Gastrocnemius medialis (tissue), 4 donors: ENCODE measurements at regions of chr10 and their contacts with region 1.

Region 1: GRCh38 chr10:14954001-14954770 is at the start of gene DCLRE1C:
- DNase-seq: peak; percentile 83 to 87
- ATAC-seq: peak; percentile 96 to 97
- H3K4me3 ChIP-seq: peak within 1 kb of the TSS; percentile 79 to 92 (median 85)
- H3K27ac ChIP-seq: peak within 1 kb of the TSS; percentile 83 to 90 (median 84)
- H3K4me1 ChIP-seq: peaks cover 4 to 12% of the 10 kb centered on the region in 2 donors
- H3K27me3 ChIP-seq: no peaks in the 10 kb centered on the region
- CTCF ChIP-seq: no peak
- POLR2A ChIP-seq: peak in 1 of 2 donors; percentile 41
- total RNA-seq, gene DCLRE1C: 3.0 to 3.6 (median 3.3) TPM

Region 2: DNA sequence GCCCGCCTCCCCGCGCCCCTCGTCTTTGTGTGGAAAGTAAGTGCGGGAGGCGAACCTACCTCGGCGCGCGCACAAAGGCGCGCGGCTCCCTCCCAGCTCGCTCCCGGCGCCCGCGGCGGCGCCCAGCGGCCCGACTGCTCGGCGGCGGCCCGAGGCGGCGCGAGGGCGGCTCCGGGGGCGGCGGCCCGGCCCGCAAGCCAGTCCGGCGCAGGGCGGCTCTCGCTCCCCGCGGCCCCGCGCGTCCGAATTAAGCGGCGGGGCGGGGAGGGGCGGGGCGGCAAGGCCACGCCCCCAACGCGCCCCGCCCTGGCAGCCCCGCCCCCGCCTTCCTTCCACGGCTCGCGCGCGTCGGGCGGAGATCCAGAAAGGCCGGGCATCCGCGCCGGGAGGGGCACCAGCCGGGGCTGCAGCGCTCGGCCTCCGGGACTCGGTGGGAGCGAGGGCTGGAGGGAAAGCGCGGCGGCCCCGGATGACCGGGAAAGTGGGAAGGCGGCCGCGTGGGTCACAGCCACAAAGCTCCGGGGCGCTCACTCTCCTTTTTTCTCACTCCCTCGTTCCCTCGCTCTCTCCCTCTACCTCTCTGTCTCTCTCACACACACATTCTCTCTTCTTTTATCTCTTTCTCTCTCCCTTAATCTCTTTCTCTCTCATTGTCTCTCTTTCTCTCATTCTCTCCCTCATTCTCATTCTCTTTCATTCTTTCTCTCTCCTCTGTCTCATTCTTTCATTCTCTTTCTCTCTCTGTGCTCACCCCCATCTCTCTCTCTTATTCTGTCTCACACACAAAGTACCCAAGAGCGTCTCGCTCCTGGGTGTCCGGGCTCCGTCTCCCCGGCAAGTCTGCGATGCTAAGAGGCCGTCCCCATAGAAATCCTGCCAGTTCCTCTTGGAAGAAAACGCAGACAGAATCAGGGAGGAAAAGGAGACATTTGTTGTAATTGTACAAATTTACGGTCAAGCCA is 349.7 kb before region 1 on chr10:
- in situ Hi-C with region 1: no loop called
- intact Hi-C with region 1: loop called (anchors 5 kb)
- DNase-seq: peak; percentile 52 to 53
- ATAC-seq: peak; percentile 89 to 90
- H3K4me3 ChIP-seq: peak overlapping the region; percentile 56 to 79 (median 66)
- H3K27ac ChIP-seq: peak overlapping the region; percentile 30 to 58 (median 44)
- H3K4me1 ChIP-seq: peaks cover 7 to 12% of the 10 kb centered on the region in 2 donors
- H3K27me3 ChIP-seq: no peaks in the 10 kb centered on the region
- CTCF ChIP-seq: no peak
- POLR2A ChIP-seq: peak in 1 of 2 donors; percentile 66

Region 3: DNA sequence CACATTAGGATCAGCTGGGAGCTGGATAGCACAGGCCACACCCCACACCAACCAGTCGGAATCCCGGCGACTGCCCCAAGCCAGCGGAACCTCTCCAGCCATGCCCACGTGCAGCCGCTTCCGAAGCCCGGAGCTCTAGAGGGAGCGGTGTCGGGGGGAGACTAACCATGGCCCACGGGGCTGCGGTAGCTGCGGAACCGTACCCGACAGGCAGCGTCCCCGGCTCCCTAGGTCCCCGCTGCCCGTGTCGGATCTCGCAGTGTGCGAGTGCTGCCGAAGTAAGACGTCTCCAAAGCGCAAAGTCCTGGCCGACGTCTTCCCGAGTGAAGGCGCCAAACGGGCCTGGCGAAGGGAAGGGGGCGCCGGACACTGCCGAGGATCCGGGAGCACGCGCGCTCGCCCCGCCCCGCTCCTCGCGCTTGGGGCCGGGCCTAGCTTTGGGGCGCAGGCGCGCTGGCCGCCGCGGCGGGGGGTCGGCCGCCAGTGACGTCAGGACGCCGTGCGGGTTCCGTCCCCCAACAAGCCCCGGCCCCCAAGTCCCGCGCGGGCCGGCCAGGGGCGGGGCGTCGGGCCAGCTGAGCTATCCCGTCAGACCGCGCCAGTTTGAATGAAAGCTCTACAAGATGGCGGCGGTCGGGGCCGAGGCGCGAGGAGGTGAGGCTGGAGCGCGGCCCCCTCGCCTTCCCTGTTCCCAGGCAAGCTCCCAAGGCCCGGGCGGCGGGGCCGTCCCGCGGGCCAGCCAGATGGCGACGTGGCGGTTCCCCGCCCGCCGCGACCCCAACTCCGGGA is 75.7 kb before region 1 on chr10 and contains the start of gene SUV39H2:
- in situ Hi-C with region 1: no loop called
- intact Hi-C with region 1: loop called (anchors 1 kb)
- DNase-seq: peak; percentile 89 to 93
- ATAC-seq: peak; percentile 85 to 88
- H3K4me3 ChIP-seq: peak within 1 kb of the TSS; percentile 89 to 95 (median 94)
- H3K27ac ChIP-seq: peak within 1 kb of the TSS; percentile 97 to 99 (median 99)
- H3K4me1 ChIP-seq: peaks cover 30 to 34% of the 10 kb centered on the region in 2 donors
- H3K27me3 ChIP-seq: no peaks in the 10 kb centered on the region
- CTCF ChIP-seq: peak in 2 of 5 experiments; percentile 5 to 8
- POLR2A ChIP-seq: peak; percentile 87 to 88
- total RNA-seq, gene SUV39H2: 0.71 to 7.4 (median 5.0) TPM